HCT116 (cell line): ENCODE measurements at regions of chr20 and their contacts with region 1.

Region 1: DNA sequence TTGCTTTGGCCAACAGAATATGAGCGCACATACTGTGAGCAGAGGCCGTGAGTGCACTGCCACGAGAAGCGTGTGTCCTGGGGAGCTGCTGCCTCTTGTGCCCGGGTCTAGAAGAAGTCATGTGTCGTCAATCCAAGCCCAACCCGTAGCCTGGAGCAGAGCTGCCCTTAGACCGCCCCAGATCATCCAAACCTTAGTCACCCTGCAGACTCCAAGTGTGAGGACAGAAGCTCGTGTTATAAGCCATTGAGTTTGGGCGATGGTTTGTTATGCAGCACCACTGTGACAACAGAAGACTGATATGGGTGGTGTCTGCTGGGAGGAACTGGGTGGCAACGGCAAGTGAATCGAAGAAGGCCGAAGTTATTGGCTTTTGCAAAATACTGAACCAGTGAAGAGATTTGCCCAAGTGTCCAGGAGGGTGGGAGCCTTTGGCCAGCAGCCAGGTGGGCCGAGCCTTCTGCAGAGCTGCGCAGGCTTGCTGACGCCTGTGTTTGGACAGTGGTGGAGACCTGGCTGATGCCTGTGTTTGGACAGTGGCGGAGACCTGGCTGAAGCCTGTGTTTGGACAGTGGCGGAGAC is 101.3 kb upstream of the SULF2 start:
- DNase-seq: no peak
- ATAC-seq: no peak
- H3K4me3 ChIP-seq: no peak overlapping the region
- H3K27ac ChIP-seq: no peak overlapping the region
- H3K4me1 ChIP-seq: no peaks in the 10 kb centered on the region
- H3K27me3 ChIP-seq: peaks cover 11% of the 10 kb centered on the region; the same call in 1 of the 2 replicates
- CTCF ChIP-seq: no peak
- POLR2A ChIP-seq: no peak
- RAD21 ChIP-seq: no peak

Region 2: GRCh38 chr20:47809913-47810622 is 76.5 kb before region 1 on chr20:
- CTCF ChIA-PET with region 1: no interaction called
- POLR2A ChIA-PET with region 1: no interaction called
- RAD21 ChIA-PET with region 1: no interaction called
- intact Hi-C with region 1: loop called (anchors 10 kb)
- DNase-seq: no peak
- ATAC-seq: no peak
- H3K4me3 ChIP-seq: no peak overlapping the region
- H3K27ac ChIP-seq: no peak overlapping the region
- H3K4me1 ChIP-seq: peaks cover 8 to 14% of the 10 kb centered on the region in 2 experiments; a peak in 3 of 4 replicates
- H3K27me3 ChIP-seq: peaks cover 32% of the 10 kb centered on the region
- CTCF ChIP-seq: no peak
- POLR2A ChIP-seq: no peak
- RAD21 ChIP-seq: no peak

Region 3: GRCh38 chr20:47857566-47858471 is 28.7 kb before region 1 on chr20:
- CTCF ChIA-PET with region 1: no interaction called
- POLR2A ChIA-PET with region 1: no interaction called
- RAD21 ChIA-PET with region 1: no interaction called
- intact Hi-C with region 1: no loop called
- DNase-seq: no peak
- ATAC-seq: no peak
- H3K4me3 ChIP-seq: no peak overlapping the region
- H3K27ac ChIP-seq: no peak overlapping the region
- H3K4me1 ChIP-seq: peaks cover 0 to 7% of the 10 kb centered on the region in 2 experiments; a peak in 1 of 4 replicates
- H3K27me3 ChIP-seq: no peaks in the 10 kb centered on the region; the same call in 1 of the 2 replicates
- CTCF ChIP-seq: no peak
- POLR2A ChIP-seq: no peak
- RAD21 ChIP-seq: no peak

Region 4: GRCh38 chr20:48523212-48523941 is 636.8 kb after region 1 on chr20:
- CTCF ChIA-PET with region 1: no interaction called
- POLR2A ChIA-PET with region 1: no interaction called
- RAD21 ChIA-PET with region 1: no interaction called
- intact Hi-C with region 1: loop called (anchors 5 kb)
- DNase-seq: peak; percentile 10
- ATAC-seq: peak; percentile 58; the same call in 1 of the 2 replicates
- H3K4me3 ChIP-seq: no peak overlapping the region
- H3K27ac ChIP-seq: no peak overlapping the region
- H3K4me1 ChIP-seq: no peaks in the 10 kb centered on the region
- H3K27me3 ChIP-seq: peaks cover 40% of the 10 kb centered on the region
- CTCF ChIP-seq: no peak
- POLR2A ChIP-seq: no peak
- RAD21 ChIP-seq: no peak